GM12878 (cell line): ENCODE measurements at regions of chr4 and their contacts with region 1.

Region 1: GRCh38 chr4:26330186-26330787 is 9.5 kb downstream of the RBPJ start:
- DNase-seq: no peak
- ATAC-seq: peak; percentile 88
- H3K4me3 ChIP-seq: no peak overlapping the region
- H3K27ac ChIP-seq: no peak overlapping the region
- H3K4me1 ChIP-seq: no peaks in the 10 kb centered on the region
- H3K27me3 ChIP-seq: no peaks in the 10 kb centered on the region
- CTCF ChIP-seq: peak; percentile 53 to 66 (median 58)
- EP300 ChIP-seq: no peak
- POLR2A ChIP-seq: no peak
- RAD21 ChIP-seq: peak; percentile 71

Region 2: DNA sequence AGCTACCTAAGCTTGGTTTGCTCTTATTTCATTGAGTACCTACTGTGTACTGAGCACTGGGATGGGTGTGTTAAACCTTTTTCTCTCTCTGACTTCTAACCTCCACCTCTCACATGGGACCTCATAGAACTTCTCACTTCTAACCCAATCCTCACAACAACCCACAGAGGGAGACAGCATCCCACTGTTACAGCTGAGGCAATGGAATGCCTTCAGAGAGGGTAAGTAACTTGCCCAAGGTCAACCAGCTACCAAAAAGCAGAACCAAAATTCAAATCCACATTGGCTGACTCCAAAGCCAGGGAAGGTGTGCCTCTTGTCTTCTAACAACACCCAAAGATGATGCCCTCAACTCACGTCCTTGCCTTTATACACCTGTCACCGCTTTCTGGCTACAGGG is 472.9 kb before region 1 on chr4:
- CTCF ChIA-PET with region 1: no interaction called
- POLR2A ChIA-PET with region 1: no interaction called
- RAD21 ChIA-PET with region 1: no interaction called
- SMC1A ChIA-PET with region 1: no interaction called
- in situ Hi-C with region 1: no loop called
- intact Hi-C with region 1: no loop called
- DNase-seq: no peak
- ATAC-seq: no peak
- H3K4me3 ChIP-seq: no peak overlapping the region
- H3K27ac ChIP-seq: no peak overlapping the region
- H3K4me1 ChIP-seq: peaks cover 23% of the 10 kb centered on the region
- H3K27me3 ChIP-seq: no peaks in the 10 kb centered on the region; a peak in 1 of 4 replicates
- CTCF ChIP-seq: peak in 2 of 3 experiments; percentile 13 to 21; a peak in 2 of 6 replicates
- EP300 ChIP-seq: no peak
- POLR2A ChIP-seq: no peak
- RAD21 ChIP-seq: peak; percentile 66

Region 3: GRCh38 chr4:25986807-25987206 is 343.5 kb before region 1 on chr4:
- CTCF ChIA-PET with region 1: interaction called, 39 read pairs
- POLR2A ChIA-PET with region 1: no interaction called
- RAD21 ChIA-PET with region 1: interaction called, 12 read pairs
- SMC1A ChIA-PET with region 1: interaction called, 4 read pairs
- in situ Hi-C with region 1: no loop called
- intact Hi-C with region 1: loop called (anchors 5 kb)
- DNase-seq: no peak
- ATAC-seq: no peak
- H3K4me3 ChIP-seq: no peak overlapping the region
- H3K27ac ChIP-seq: no peak overlapping the region
- H3K4me1 ChIP-seq: peaks cover 5% of the 10 kb centered on the region
- H3K27me3 ChIP-seq: no peaks in the 10 kb centered on the region
- CTCF ChIP-seq: no peak
- EP300 ChIP-seq: no peak
- POLR2A ChIP-seq: no peak
- RAD21 ChIP-seq: no peak

Region 4: DNA sequence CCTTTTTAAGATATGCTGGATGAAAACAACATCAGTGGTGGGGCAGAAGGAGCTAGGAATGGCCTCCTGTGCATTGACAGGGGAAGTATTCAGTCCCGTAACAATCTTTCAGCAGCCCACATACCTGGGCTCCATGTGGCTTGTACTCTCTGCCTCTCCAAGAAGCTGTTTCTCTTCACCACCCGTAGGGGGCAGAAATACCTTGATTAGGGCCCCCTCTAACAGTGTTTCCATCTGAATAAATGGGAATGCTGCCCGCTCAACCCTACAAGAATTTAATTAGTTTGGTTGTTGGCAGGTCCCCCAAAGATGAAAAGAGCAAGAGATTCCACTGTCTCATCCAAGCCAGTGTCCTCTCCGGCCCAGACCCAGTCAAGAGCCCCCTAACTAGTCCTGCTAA is 261.1 kb before region 1 on chr4:
- CTCF ChIA-PET with region 1: interaction called, 150 read pairs
- POLR2A ChIA-PET with region 1: no interaction called
- RAD21 ChIA-PET with region 1: interaction called, 37 read pairs
- SMC1A ChIA-PET with region 1: interaction called, 12 read pairs
- in situ Hi-C with region 1: no loop called
- intact Hi-C with region 1: no loop called
- DNase-seq: no peak
- ATAC-seq: peak; percentile 89
- H3K4me3 ChIP-seq: no peak overlapping the region
- H3K27ac ChIP-seq: no peak overlapping the region
- H3K4me1 ChIP-seq: peaks cover 4% of the 10 kb centered on the region
- H3K27me3 ChIP-seq: no peaks in the 10 kb centered on the region; a peak in 1 of 4 replicates
- CTCF ChIP-seq: peak; percentile 52 to 64 (median 56); a peak in 5 of 6 replicates
- EP300 ChIP-seq: no peak
- POLR2A ChIP-seq: no peak
- RAD21 ChIP-seq: peak; percentile 75

Region 5: GRCh38 chr4:26342328-26343037 is 12.2 kb after region 1 on chr4:
- CTCF ChIA-PET with region 1: interaction called, 82 read pairs
- POLR2A ChIA-PET with region 1: no interaction called
- RAD21 ChIA-PET with region 1: interaction called, 13 read pairs
- SMC1A ChIA-PET with region 1: interaction called, 46 read pairs
- in situ Hi-C with region 1: no loop called
- intact Hi-C with region 1: no loop called
- DNase-seq: no peak
- ATAC-seq: peak; percentile 29; the same call in 2 of the 3 replicates
- H3K4me3 ChIP-seq: no peak overlapping the region
- H3K27ac ChIP-seq: no peak overlapping the region
- H3K4me1 ChIP-seq: peaks cover 16% of the 10 kb centered on the region
- H3K27me3 ChIP-seq: no peaks in the 10 kb centered on the region
- CTCF ChIP-seq: no peak
- EP300 ChIP-seq: no peak
- POLR2A ChIP-seq: no peak
- RAD21 ChIP-seq: no peak

Region 6: GRCh38 chr4:26397086-26397485 is 66.8 kb after region 1 on chr4:
- CTCF ChIA-PET with region 1: interaction called, 474 read pairs
- POLR2A ChIA-PET with region 1: no interaction called
- RAD21 ChIA-PET with region 1: interaction called, 11 read pairs
- SMC1A ChIA-PET with region 1: interaction called, 23 read pairs
- in situ Hi-C with region 1: no loop called
- intact Hi-C with region 1: no loop called
- DNase-seq: no peak
- ATAC-seq: no peak
- H3K4me3 ChIP-seq: no peak overlapping the region
- H3K27ac ChIP-seq: no peak overlapping the region
- H3K4me1 ChIP-seq: peaks cover 3% of the 10 kb centered on the region
- H3K27me3 ChIP-seq: no peaks in the 10 kb centered on the region
- CTCF ChIP-seq: no peak
- EP300 ChIP-seq: no peak
- POLR2A ChIP-seq: no peak
- RAD21 ChIP-seq: no peak

Region 7: DNA sequence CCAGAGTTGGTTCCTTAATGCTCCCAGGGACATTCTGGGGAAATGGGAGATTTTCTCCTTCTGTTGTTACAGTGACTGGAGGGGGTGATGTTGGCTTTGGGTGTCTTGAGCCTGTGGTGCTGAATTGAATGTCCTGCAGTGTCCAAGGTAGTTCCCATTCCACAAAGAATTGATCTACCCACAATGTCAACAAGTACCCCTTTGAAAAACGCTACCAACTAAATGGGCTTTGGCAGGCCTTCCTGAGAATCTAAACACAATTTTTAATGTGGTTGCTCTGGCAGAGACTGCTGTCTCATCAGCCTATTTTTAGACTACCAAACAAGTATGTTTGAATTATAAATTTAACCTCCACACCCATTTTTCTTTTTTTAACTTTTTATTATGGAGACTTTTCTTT is 90.6 kb after region 1 on chr4:
- CTCF ChIA-PET with region 1: interaction called, 474 read pairs
- POLR2A ChIA-PET with region 1: no interaction called
- RAD21 ChIA-PET with region 1: interaction called, 5 read pairs
- SMC1A ChIA-PET with region 1: interaction called, 16 read pairs
- in situ Hi-C with region 1: no loop called
- intact Hi-C with region 1: no loop called
- DNase-seq: no peak
- ATAC-seq: no peak
- H3K4me3 ChIP-seq: no peak overlapping the region
- H3K27ac ChIP-seq: no peak overlapping the region
- H3K4me1 ChIP-seq: no peaks in the 10 kb centered on the region
- H3K27me3 ChIP-seq: no peaks in the 10 kb centered on the region
- CTCF ChIP-seq: no peak
- EP300 ChIP-seq: no peak
- POLR2A ChIP-seq: no peak
- RAD21 ChIP-seq: no peak

Region 8: GRCh38 chr4:26473893-26474292 is 143.6 kb after region 1 on chr4:
- CTCF ChIA-PET with region 1: no interaction called
- POLR2A ChIA-PET with region 1: no interaction called
- RAD21 ChIA-PET with region 1: no interaction called
- SMC1A ChIA-PET with region 1: no interaction called
- in situ Hi-C with region 1: no loop called
- intact Hi-C with region 1: no loop called
- DNase-seq: no peak
- ATAC-seq: no peak
- H3K4me3 ChIP-seq: no peak overlapping the region
- H3K27ac ChIP-seq: no peak overlapping the region
- H3K4me1 ChIP-seq: no peaks in the 10 kb centered on the region
- H3K27me3 ChIP-seq: no peaks in the 10 kb centered on the region; a peak in 1 of 4 replicates
- CTCF ChIP-seq: no peak
- EP300 ChIP-seq: no peak
- POLR2A ChIP-seq: no peak
- RAD21 ChIP-seq: 0 out of 2 replicates have a peak, but pooled peaks have one; percentile 15

Region 9: GRCh38 chr4:26936284-26937065 is 606.2 kb after region 1 on chr4:
- CTCF ChIA-PET with region 1: no interaction called
- POLR2A ChIA-PET with region 1: no interaction called
- RAD21 ChIA-PET with region 1: no interaction called
- SMC1A ChIA-PET with region 1: no interaction called
- in situ Hi-C with region 1: no loop called
- intact Hi-C with region 1: no loop called
- DNase-seq: no peak
- ATAC-seq: peak; percentile 45
- H3K4me3 ChIP-seq: no peak overlapping the region
- H3K27ac ChIP-seq: no peak overlapping the region
- H3K4me1 ChIP-seq: peaks cover 4% of the 10 kb centered on the region; the same call in 1 of the 2 replicates
- H3K27me3 ChIP-seq: no peaks in the 10 kb centered on the region
- CTCF ChIP-seq: no peak
- EP300 ChIP-seq: no peak
- POLR2A ChIP-seq: no peak
- RAD21 ChIP-seq: no peak